Transverse colon (tissue), 4 donors: ENCODE measurements at regions of chr1 and their contacts with region 1.

Region 1: DNA sequence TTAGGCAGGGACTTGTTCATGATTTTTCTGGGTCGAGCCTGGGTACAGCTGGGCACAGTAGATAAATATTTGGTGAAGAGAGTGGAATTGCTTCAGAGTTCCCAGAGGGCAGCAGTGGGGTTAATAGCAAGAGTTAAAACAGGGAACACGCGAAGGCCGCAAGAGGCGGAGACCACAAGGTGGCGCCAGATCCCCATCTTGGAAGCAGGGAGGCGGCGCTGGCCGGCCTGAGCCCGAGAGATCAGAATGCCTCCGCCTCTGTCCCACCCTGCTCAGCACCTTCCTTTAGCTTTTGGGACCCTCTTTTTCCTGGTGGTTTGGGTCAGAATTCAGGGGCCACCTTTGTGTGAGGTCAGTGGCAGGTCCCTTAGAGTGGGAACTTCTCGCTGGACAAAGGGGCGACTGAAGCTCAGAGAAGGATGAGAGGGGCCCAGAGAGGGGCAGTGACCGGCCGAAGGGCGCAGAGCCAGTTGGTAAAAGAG is 6.5 kb upstream of the PADI2 start:
- DNase-seq: peak; percentile 92
- H3K4me3 ChIP-seq: no peak overlapping the region
- H3K27ac ChIP-seq: no peak overlapping the region
- H3K4me1 ChIP-seq: peaks cover 0 to 36% (median 18%) of the 10 kb centered on the region in 4 donors
- H3K27me3 ChIP-seq: no peaks in the 10 kb centered on the region
- CTCF ChIP-seq: peak; percentile 91 to 96 (median 94)
- EP300 ChIP-seq: no peak
- POLR2A ChIP-seq: no peak

Region 2: GRCh38 chr1:17141441-17142197 is 15.8 kb after region 1 on chr1:
- in situ Hi-C with region 1: no loop called
- intact Hi-C with region 1: no loop called
- DNase-seq: no peak
- H3K4me3 ChIP-seq: no peak overlapping the region
- H3K27ac ChIP-seq: no peak overlapping the region
- H3K4me1 ChIP-seq: no peaks in the 10 kb centered on the region
- H3K27me3 ChIP-seq: peaks cover 7% of the 10 kb centered on the region
- CTCF ChIP-seq: no peak
- EP300 ChIP-seq: no peak
- POLR2A ChIP-seq: no peak

Region 3: GRCh38 chr1:17236779-17237560 is 111.2 kb after region 1 on chr1:
- in situ Hi-C with region 1: loop called (anchors 5 to 10 kb)
- intact Hi-C with region 1: loop called (anchors 2 kb)
- DNase-seq: peak; percentile 92
- H3K4me3 ChIP-seq: no peak overlapping the region
- H3K27ac ChIP-seq: no peak overlapping the region
- H3K4me1 ChIP-seq: peaks cover 13 to 27% (median 20%) of the 10 kb centered on the region in 4 donors
- H3K27me3 ChIP-seq: no peaks in the 10 kb centered on the region
- CTCF ChIP-seq: peak; percentile 87 to 94 (median 92)
- EP300 ChIP-seq: no peak
- POLR2A ChIP-seq: no peak

Region 4: DNA sequence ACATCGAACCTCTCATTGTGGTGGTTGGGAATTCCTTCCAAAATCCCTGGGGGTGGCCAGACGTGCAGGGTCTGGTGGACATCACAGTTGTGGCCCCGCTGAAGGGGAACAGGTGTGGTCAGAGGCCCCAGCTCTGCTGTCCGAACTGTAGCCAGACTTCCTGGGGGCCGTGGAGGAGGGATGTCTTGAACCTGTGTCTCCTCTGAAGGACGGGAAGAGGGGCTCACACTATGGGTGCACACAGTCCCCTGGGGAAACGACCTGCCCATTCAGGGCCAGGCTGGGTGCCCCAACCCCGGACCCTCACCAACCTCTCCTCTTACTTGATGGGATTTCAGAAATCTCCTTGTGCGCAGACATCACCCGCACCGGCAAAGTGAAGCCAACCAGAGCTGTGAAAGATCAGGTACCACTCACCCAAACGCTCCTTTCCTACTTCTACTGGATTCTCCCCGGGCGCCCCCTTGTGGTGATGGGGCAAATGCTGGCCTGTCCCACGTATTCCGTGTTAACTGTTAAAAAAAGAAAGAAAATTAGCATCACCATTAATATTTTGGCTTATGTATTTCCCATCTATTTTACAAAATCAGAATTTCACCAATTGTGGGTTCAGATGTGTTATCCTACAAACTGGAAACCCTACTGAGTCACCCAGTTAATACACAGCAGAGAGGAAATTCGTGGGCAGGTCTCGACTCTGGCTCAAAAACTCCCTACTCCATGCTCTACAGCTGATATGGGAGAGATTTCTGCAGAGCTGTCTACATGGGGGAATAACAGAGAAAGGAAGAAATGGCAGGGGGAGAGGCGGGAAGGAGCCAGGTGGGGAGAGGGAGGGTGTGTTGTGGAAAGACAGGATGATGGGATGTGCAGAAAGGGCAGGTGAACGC is 210.3 kb after region 1 on chr1:
- in situ Hi-C with region 1: loop called in 3 of 4 experiments (anchors 10 kb)
- intact Hi-C with region 1: no loop called
- DNase-seq: peak; percentile 69
- H3K4me3 ChIP-seq: no peak overlapping the region
- H3K27ac ChIP-seq: no peak overlapping the region
- H3K4me1 ChIP-seq: no peaks in the 10 kb centered on the region
- H3K27me3 ChIP-seq: peaks cover 11% of the 10 kb centered on the region
- CTCF ChIP-seq: peak; percentile 74 to 85 (median 77)
- EP300 ChIP-seq: no peak
- POLR2A ChIP-seq: no peak

Region 5: GRCh38 chr1:17348125-17348979 is 222.6 kb after region 1 on chr1:
- in situ Hi-C with region 1: loop called in 1 of 4 experiments (anchors 10 kb)
- intact Hi-C with region 1: no loop called
- DNase-seq: no peak
- H3K4me3 ChIP-seq: no peak overlapping the region
- H3K27ac ChIP-seq: no peak overlapping the region
- H3K4me1 ChIP-seq: no peaks in the 10 kb centered on the region
- H3K27me3 ChIP-seq: peaks cover 15% of the 10 kb centered on the region
- CTCF ChIP-seq: no peak
- EP300 ChIP-seq: no peak
- POLR2A ChIP-seq: no peak